ENCODE measurements at regions of chr18 and their contacts with region 1.

Region 1: GRCh38 chr18:51197661-51198424 is at the start of gene MEX3C:
- DNase-seq: peak; percentile 100
- ATAC-seq: peak; percentile 86
- H3K4me3 Mint-ChIP-seq: peak within 1 kb of the TSS; percentile 95
- H3K27ac Mint-ChIP-seq: peak within 1 kb of the TSS; percentile 96
- H3K4me1 Mint-ChIP-seq: peaks cover 25% of the 10 kb centered on the region
- H3K27me3 Mint-ChIP-seq: no peaks in the 10 kb centered on the region
- total RNA-seq, gene MEX3C: 46.7 to 66.9 TPM

Region 2: GRCh38 chr18:50967714-50968661 is 229.9 kb before region 1 on chr18 and contains the start of gene ELAC1:
- CTCF ChIA-PET with region 1: no interaction called
- POLR2A ChIA-PET with region 1: no interaction called
- intact Hi-C with region 1: loop called in 1 of 2 experiments (anchors 2 kb)
- DNase-seq: peak; percentile 76
- ATAC-seq: peak; percentile 91
- H3K4me3 Mint-ChIP-seq: peak within 1 kb of the TSS; percentile 76
- H3K27ac Mint-ChIP-seq: peak within 1 kb of the TSS; percentile 94
- H3K4me1 Mint-ChIP-seq: peaks cover 30% of the 10 kb centered on the region
- H3K27me3 Mint-ChIP-seq: no peaks in the 10 kb centered on the region
- total RNA-seq, gene ELAC1: 4.7 to 5.6 TPM

Region 3: DNA sequence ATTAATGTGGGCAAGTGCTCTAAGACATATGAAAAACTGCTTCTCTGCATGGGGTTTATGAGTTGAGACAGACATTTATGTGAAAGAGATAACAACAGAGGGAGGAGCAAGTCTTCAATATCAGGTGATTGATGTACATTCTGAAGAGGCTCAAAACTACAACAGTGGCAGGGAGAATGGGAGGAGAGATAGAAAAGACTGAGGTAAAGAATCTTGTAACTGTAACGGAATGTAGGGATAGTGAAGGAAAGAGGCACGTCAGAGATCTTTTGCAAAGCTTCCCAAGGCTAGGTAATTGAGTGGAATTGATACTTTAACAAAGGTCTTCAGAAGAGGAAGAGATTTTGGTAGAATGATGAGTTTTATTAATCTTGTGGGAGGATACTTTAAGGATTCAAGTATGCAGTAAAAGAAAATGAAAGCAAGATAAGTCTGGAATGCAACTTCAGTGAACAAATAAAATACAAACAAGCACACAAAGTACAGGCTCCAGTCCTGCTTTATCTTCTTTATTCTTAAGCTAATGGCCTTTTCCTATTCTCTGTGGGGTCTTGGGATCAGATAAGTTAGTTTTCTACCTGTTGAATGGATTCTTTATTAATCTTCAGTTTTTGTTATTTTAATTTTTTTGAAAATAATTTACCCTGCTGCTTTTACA is 152.8 kb before region 1 on chr18:
- CTCF ChIA-PET with region 1: no interaction called
- POLR2A ChIA-PET with region 1: no interaction called
- intact Hi-C with region 1: loop called in 1 of 2 experiments (anchors 5 kb)
- DNase-seq: no peak
- ATAC-seq: no peak
- H3K4me3 Mint-ChIP-seq: no peak overlapping the region
- H3K27ac Mint-ChIP-seq: peak overlapping the region; percentile 78
- H3K4me1 Mint-ChIP-seq: peaks cover 58% of the 10 kb centered on the region
- H3K27me3 Mint-ChIP-seq: no peaks in the 10 kb centered on the region

Region 4: DNA sequence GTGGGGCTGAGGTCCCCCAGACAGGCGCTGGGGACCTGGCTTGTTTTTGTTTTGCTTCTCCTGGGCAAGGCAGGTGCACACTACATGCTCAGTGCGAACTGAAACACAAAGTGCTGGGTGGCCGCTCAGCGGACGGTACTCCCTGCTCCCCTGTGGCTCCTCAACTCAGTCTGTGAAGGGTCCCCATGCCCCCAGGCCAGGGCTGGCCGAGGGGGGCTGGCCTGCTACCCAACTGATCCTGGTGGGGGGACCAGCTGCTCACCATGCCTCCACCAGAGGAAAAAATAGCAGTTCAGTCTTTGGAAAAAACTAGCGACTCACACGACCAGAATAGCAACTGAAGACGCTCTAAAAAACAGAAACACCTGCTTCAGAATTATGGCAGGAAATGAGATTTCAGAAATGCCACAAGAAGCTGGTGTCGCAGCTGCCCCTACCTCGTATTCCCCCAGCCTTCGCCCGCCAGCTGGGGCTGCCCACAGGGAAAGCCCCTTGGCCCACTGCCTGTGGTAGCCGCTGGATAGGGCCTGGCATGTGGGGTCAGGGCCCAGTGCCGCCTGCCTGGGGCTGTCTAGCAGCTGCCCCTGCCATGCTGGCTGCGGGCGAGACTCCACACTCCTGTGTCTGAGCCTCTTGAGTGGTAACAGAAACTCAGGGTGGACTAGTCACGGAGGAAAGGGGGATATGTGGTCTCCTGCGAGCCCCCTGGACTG is 44.0 kb before region 1 on chr18:
- CTCF ChIA-PET with region 1: interaction called, 3 read pairs
- POLR2A ChIA-PET with region 1: interaction called, 4 read pairs
- intact Hi-C with region 1: loop called (anchors 1 to 5 kb)
- DNase-seq: peak; percentile 67
- ATAC-seq: peak; percentile 28
- H3K4me3 Mint-ChIP-seq: peak overlapping the region; percentile 64
- H3K27ac Mint-ChIP-seq: peak overlapping the region; percentile 98
- H3K4me1 Mint-ChIP-seq: peaks cover 52% of the 10 kb centered on the region
- H3K27me3 Mint-ChIP-seq: no peaks in the 10 kb centered on the region

Region 5: GRCh38 chr18:51211552-51211951 is 13.7 kb after region 1 on chr18:
- CTCF ChIA-PET with region 1: interaction called, 8 read pairs
- POLR2A ChIA-PET with region 1: no interaction called
- intact Hi-C with region 1: loop called in 1 of 2 experiments (anchors 1 kb)
- DNase-seq: peak; percentile 70
- ATAC-seq: peak; percentile 93
- H3K4me3 Mint-ChIP-seq: no peak overlapping the region
- H3K27ac Mint-ChIP-seq: peak overlapping the region; percentile 33
- H3K4me1 Mint-ChIP-seq: peaks cover 13% of the 10 kb centered on the region
- H3K27me3 Mint-ChIP-seq: peaks cover 3% of the 10 kb centered on the region

Measured in activated CD4-positive, alpha-beta T cell treated with anti-CD3 and anti-CD28 coated beads for 36 hours (primary cell).